Ascending aorta (tissue), 2 donors: ENCODE measurements at regions of chr9 and their contacts with region 1.

Region 1: GRCh38 chr9:122931226-122932121 is at the start of gene ZBTB26:
- DNase-seq: peak; percentile 80 to 97
- H3K4me3 ChIP-seq: peak within 1 kb of the TSS; percentile 82 to 84
- H3K27ac ChIP-seq: peak within 1 kb of the TSS; percentile 78 to 80
- H3K4me1 ChIP-seq: peaks cover 6 to 20% of the 10 kb centered on the region in 2 donors
- H3K27me3 ChIP-seq: no peaks in the 10 kb centered on the region
- CTCF ChIP-seq: no peak
- total RNA-seq, gene ZBTB26: 0.96 TPM

Region 2: GRCh38 chr9:122827761-122828093 is 103.7 kb before region 1 on chr9:
- intact Hi-C with region 1: loop called (anchors 1 kb)
- DNase-seq: no peak
- H3K4me3 ChIP-seq: peak overlapping the region; percentile 64 to 92
- H3K27ac ChIP-seq: peak overlapping the region; percentile 93 to 98
- H3K4me1 ChIP-seq: peaks cover 3 to 15% of the 10 kb centered on the region in 2 donors
- H3K27me3 ChIP-seq: no peaks in the 10 kb centered on the region
- CTCF ChIP-seq: no peak

Region 3: DNA sequence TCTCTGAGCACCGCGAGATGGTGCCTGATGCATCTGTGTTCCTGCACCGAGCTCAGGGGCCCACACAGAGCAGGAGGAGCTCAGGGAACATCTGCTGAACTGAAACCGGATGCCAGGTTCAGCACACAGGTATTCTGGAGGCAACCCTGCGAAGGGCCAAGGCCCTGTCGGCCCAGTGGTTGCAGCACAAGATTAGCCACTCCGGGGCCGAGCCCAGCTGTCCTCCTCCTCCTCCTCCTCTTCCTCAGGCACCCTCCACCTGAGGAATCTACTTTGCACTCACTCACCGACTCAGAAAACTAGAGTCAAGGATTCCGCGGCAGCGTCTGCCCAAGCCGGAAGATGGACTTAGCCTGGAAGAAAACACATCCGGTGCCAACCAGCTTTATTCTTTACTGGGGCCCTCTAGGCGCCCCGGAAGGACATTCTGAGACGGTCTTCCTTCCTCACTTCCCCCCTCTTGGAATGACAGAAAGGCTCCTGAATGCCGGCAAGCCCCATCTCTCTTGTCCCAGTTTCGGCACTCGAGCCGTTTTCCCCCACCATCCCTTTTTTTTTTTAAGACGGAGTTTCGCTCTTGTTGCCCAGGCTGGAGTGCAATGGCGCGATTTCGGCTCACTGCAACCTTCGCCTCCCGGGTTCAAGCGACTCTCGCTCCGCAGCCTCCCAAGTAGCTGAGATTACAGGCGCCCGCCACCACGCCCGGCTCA is 18.4 kb before region 1 on chr9 and contains the start of gene ZBTB6:
- intact Hi-C with region 1: loop called (anchors 2 kb)
- DNase-seq: peak; percentile 21 to 87
- H3K4me3 ChIP-seq: peak within 1 kb of the TSS; percentile 84 to 98
- H3K27ac ChIP-seq: peak within 1 kb of the TSS; percentile 85 to 87
- H3K4me1 ChIP-seq: peaks cover 0 to 3% of the 10 kb centered on the region in 2 donors
- H3K27me3 ChIP-seq: no peaks in the 10 kb centered on the region
- CTCF ChIP-seq: peak in 1 of 3 experiments; percentile 6
- total RNA-seq, gene ZBTB6: 2.0 TPM

Region 4: GRCh38 chr9:122991370-122991830 is 59.9 kb after region 1 on chr9:
- intact Hi-C with region 1: loop called (anchors 1 kb)
- DNase-seq: peak in 1 of 2 donors; percentile 68
- H3K4me3 ChIP-seq: no peak overlapping the region
- H3K27ac ChIP-seq: peak overlapping the region in 1 of 2 donors; percentile 60
- H3K4me1 ChIP-seq: no peaks in the 10 kb centered on the region
- H3K27me3 ChIP-seq: no peaks in the 10 kb centered on the region
- CTCF ChIP-seq: peak; percentile 53 to 70 (median 57)

Region 5: DNA sequence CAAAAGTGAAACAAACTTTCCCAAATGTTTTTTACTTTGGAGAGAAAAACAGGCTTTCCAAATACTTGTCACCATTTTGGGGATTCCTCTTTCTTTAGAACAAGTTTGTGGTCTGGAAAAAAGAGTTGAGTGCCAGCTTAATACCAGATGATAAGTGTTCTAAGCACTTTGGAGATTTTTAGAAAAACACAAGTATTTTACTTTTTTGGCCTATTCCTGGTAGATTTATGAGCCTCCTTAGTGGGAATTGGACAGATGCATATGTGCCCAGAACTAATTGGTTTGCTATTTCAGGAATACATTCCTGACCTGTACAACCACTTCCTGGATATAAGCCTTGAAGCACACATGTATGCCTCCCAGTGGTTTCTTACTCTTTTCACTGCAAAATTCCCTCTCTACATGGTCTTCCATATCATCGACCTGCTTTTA is 142.5 kb after region 1 on chr9:
- intact Hi-C with region 1: no loop called
- DNase-seq: no peak
- H3K4me3 ChIP-seq: peak overlapping the region in 1 of 2 donors; percentile 33
- H3K27ac ChIP-seq: peak overlapping the region; percentile 68 to 71
- H3K4me1 ChIP-seq: peaks cover 8 to 20% of the 10 kb centered on the region in 2 donors
- H3K27me3 ChIP-seq: no peaks in the 10 kb centered on the region
- CTCF ChIP-seq: no peak